Stomach (tissue), 19 donors: ENCODE measurements at regions of chrX and their contacts with region 1.

Region 1: GRCh38 chrX:110163488-110163887 is 154.4 kb downstream of the AMMECR1 start:
- DNase-seq: no peak
- H3K4me3 ChIP-seq: no peak overlapping the region
- H3K27ac ChIP-seq: no peak overlapping the region
- H3K4me1 ChIP-seq: no peaks in the 10 kb centered on the region
- H3K27me3 ChIP-seq: peaks cover 0 to 4% (median 0%) of the 10 kb centered on the region in 3 donors
- CTCF ChIP-seq: no peak
- EP300 ChIP-seq: no peak
- POLR2A ChIP-seq: no peak

Region 2: GRCh38 chrX:109830704-109831206 is 332.7 kb before region 1 on chrX:
- intact Hi-C with region 1: no loop called
- DNase-seq: no peak
- H3K4me3 ChIP-seq: no peak overlapping the region
- H3K27ac ChIP-seq: peak overlapping the region in 2 of 5 donors; percentile 22 to 58
- H3K4me1 ChIP-seq: peaks cover 0 to 7% (median 0%) of the 10 kb centered on the region in 4 donors
- H3K27me3 ChIP-seq: peaks cover 0 to 6% (median 0%) of the 10 kb centered on the region in 3 donors
- CTCF ChIP-seq: no peak
- EP300 ChIP-seq: no peak
- POLR2A ChIP-seq: no peak

Region 3: DNA sequence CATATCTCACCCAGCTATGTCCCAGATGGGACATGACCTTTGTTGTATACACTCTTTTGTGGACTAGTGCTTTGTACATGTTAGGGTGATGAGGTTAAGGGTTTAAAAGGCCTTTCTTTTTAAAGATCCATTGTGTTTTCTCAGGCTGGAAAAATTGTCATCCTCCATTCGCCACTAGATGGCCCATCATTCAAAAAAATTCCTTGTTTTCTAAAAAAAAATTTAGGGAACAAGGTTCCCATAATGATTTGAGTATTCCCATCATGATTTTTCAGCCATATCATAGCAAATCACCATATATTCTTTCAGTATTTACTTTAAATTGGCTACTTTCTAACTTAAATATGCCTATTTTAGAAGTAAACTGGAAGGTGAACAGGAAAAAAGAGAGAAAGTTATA is 252.4 kb before region 1 on chrX:
- intact Hi-C with region 1: no loop called
- DNase-seq: no peak
- H3K4me3 ChIP-seq: no peak overlapping the region
- H3K27ac ChIP-seq: no peak overlapping the region
- H3K4me1 ChIP-seq: no peaks in the 10 kb centered on the region
- H3K27me3 ChIP-seq: peaks cover 0 to 3% (median 0%) of the 10 kb centered on the region in 3 donors
- CTCF ChIP-seq: peak in 3 of 7 experiments; percentile 23 to 40 (median 37)
- EP300 ChIP-seq: no peak
- POLR2A ChIP-seq: no peak

Region 4: GRCh38 chrX:110226931-110227330 is 63.4 kb after region 1 on chrX:
- intact Hi-C with region 1: no loop called
- DNase-seq: no peak
- H3K4me3 ChIP-seq: no peak overlapping the region
- H3K27ac ChIP-seq: no peak overlapping the region
- H3K4me1 ChIP-seq: no peaks in the 10 kb centered on the region
- H3K27me3 ChIP-seq: no peaks in the 10 kb centered on the region
- CTCF ChIP-seq: no peak
- EP300 ChIP-seq: no peak
- POLR2A ChIP-seq: no peak

Region 5: DNA sequence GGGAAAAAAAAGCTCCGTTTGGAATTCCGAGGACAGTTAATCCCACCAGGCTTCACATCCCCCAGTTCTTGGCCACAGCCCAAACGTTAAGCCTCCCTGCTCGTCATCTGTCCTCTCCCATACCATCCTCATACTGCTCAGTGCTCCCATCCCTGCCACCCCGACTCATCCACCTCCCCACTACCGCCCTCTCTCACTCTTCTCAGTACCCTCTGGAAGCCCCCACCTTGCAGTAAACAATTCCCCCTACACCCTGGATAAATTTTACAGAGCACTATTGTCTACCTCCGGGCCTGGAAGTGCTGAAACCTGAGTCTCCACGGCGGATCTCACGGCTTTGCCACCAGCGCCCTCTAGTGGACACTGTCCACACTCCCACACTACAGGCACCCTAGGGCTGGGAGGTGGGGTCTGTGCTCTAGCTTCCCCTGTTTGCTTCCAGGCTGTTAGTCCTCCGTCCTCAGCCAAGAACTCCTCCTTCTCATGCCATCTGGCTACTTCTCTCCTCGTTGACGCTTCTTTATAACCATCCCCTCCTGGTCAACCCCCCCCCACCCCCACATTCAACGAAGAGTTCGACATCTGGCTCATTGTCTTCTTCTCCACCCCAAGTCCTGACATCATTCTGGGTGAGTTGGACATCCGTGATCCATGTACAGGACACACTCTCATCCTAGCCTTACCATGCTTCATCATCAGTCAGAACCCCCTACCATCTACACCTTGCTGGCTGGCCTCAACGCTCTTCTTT is 249.7 kb after region 1 on chrX:
- intact Hi-C with region 1: loop called (anchors 5 kb)
- DNase-seq: peak; percentile 75 to 90
- H3K4me3 ChIP-seq: no peak overlapping the region
- H3K27ac ChIP-seq: peak overlapping the region in 1 of 5 donors; percentile 30
- H3K4me1 ChIP-seq: peaks cover 0 to 8% (median 4%) of the 10 kb centered on the region in 4 donors
- H3K27me3 ChIP-seq: peaks cover 0 to 8% (median 0%) of the 10 kb centered on the region in 3 donors
- CTCF ChIP-seq: peak in 5 of 7 experiments; percentile 39 to 83 (median 69)
- EP300 ChIP-seq: no peak
- POLR2A ChIP-seq: no peak

Region 6: DNA sequence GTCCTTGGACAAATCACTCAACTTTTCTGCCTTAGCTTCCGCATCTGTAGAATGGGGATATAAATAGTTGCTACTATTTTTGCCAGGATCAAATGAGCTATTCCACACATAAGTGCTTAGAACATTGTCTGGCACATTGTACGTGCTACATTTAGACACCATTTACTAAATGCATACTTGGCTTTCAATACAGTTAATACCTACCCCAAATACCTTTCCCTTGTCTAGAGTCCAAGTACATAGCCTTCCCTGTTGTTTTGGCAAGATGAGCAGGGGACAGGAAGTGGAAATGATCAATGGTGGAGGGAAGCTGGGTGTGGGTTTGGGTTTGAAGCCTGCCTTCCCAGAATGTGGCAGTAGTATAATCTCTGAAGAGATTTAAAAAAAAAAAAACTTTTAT is 550.2 kb after region 1 on chrX:
- intact Hi-C with region 1: no loop called
- DNase-seq: no peak
- H3K4me3 ChIP-seq: no peak overlapping the region
- H3K27ac ChIP-seq: no peak overlapping the region
- H3K4me1 ChIP-seq: no peaks in the 10 kb centered on the region
- H3K27me3 ChIP-seq: no peaks in the 10 kb centered on the region
- CTCF ChIP-seq: no peak
- EP300 ChIP-seq: no peak
- POLR2A ChIP-seq: no peak